Aorta (tissue), 5 donors: ENCODE measurements at regions of chr2 and their contacts with region 1.

Region 1: DNA sequence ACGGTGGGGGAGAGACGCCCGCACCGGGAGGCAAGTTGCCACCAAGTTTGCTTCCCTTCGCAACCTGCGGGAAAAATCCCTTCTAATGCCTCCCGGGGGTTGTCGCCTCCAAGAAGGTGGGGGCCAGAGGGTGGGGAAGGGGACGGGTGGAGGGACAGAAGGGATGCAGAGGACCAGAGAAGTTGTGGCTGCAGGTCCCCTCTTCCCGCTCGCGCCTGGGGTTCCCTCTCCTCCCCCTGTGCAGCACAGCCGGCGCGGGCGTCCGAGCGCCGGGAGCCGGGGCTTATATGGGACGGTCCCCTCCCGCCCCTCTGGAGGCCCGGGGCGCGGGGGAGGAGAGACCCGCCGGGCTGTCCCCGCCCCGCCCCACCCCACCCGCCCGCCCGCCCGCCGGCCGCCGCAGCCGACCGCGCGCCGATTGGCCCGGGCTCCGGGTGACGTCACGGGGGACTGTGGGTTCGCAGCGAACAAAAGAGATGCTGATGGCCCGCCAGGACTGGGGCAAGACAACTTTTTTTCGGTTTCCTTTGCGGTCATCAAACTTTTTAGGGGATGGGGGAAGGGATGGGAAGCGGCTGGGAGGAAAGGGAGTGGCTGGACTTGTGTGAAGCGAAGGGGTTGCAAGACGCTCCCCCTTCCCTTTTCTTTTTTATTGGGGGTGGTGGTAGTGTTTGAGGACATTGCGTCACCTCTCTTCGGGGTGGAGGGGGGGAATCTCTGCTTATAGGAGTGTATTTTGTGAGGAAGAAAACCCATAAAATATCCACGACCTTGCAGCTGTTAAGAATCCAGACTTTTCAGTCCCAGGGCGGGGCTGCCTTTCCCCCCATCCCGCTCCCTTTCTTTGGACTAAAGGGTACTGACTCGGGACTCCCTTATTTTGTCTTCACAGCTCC is at the start of gene FN1:
- DNase-seq: peak; percentile 97 to 98
- ATAC-seq: peak; percentile 96
- H3K4me3 ChIP-seq: peak within 1 kb of the TSS; percentile 72 to 91
- H3K27ac ChIP-seq: peak within 1 kb of the TSS; percentile 98 to 99
- H3K4me1 ChIP-seq: peaks cover 2 to 4% of the 10 kb centered on the region in 2 donors
- H3K27me3 ChIP-seq: no peaks in the 10 kb centered on the region
- total RNA-seq, gene FN1: 4,393 to 6,899 TPM

Region 2: DNA sequence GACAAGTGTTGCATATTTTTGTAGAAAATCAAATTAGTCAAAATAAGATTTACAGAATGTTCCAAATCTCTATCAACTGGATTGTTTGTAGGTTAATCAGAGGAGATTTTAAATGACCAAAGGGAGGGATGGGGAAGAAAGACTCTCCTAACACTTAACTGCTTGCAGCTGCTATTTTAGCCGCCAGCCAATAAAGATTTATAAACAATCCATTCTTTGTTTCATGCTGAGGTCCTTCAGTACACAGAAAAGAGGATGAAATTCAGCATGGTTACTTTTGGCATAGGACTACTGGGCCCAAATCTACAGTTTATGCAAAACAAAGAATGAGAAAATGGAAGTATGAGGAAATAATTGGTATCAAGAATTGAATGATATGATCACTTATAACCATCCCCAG is 86.2 kb after region 1 on chr2:
- intact Hi-C with region 1: no loop called
- DNase-seq: no peak
- ATAC-seq: no peak
- H3K4me3 ChIP-seq: no peak overlapping the region
- H3K27ac ChIP-seq: no peak overlapping the region
- H3K4me1 ChIP-seq: no peaks in the 10 kb centered on the region
- H3K27me3 ChIP-seq: no peaks in the 10 kb centered on the region

Region 3: DNA sequence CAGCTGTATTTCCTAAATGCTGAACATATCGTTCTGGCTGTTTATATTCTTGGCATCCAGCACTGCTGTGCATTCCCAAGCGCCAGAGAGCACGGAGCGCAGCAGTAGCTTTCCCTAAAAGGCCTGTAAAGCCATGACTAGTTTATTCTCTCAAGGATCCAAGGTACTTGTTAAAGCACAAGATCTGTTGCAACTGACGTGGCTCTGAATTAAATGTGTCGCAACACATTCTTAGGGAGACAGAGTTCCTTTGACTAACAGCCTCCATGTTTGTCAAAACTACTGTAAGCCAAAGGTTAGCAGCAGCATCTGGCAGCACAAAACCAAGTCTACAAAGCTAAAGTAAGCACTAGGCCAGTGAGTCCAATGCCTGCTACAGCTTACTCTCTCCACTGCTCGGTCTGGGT is 188.4 kb after region 1 on chr2:
- intact Hi-C with region 1: loop called in 1 of 2 experiments (anchors 10 kb)
- DNase-seq: peak in 1 of 2 donors; percentile 47
- ATAC-seq: peak; percentile 83
- H3K4me3 ChIP-seq: no peak overlapping the region
- H3K27ac ChIP-seq: peak overlapping the region; percentile 16 to 91
- H3K4me1 ChIP-seq: peaks cover 4 to 6% of the 10 kb centered on the region in 2 donors
- H3K27me3 ChIP-seq: no peaks in the 10 kb centered on the region

Region 4: GRCh38 chr2:215843579-215843978 is 407.5 kb after region 1 on chr2:
- intact Hi-C with region 1: loop called in 1 of 2 experiments (anchors 10 kb)
- DNase-seq: peak in 1 of 2 donors; percentile 59
- ATAC-seq: peak; percentile 83
- H3K4me3 ChIP-seq: no peak overlapping the region
- H3K27ac ChIP-seq: peak overlapping the region; percentile 11 to 13
- H3K4me1 ChIP-seq: peaks cover 0 to 3% of the 10 kb centered on the region in 2 donors
- H3K27me3 ChIP-seq: no peaks in the 10 kb centered on the region

Region 5: DNA sequence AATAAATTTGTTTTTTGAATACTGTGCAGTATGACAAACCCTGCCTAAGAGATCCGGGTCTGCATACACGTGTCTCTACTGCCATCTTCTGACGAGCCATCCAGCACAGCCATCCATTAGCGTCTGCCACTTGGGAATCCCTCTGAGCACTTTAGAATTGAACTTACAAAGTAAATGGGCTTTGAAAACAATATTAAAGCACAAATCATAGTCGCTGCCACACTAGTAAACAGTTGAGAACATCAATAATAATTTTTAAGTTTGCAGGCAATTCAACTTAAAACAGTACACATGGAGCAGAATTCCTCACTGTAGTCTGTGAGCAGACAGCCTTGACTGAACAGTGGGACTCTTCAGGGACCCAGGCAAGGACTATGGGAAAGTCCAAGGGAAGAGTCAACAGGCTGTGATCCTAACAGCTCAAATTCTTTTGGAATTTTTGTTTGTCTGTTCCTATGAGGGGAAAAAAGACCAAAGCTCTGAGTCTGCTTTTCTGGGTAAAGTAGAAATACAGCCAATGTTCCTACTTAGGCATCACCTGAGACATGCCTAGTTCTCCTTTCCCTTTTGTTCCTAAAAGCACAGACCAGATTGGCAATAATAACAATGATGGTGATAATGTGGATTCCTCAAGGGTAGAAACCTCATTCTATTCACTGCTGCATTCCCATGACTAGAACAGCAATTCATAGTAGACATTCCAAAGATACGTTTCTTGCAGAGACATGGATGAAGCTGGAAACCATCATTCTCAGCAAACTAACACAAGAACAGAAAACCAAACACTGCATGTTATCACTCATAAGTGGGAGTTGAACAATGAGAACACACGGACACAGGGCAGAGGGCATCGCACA is 484.4 kb after region 1 on chr2:
- intact Hi-C with region 1: loop called in 1 of 2 experiments (anchors 5 kb)
- DNase-seq: peak in 1 of 2 donors; percentile 76
- ATAC-seq: peak; percentile 95
- H3K4me3 ChIP-seq: no peak overlapping the region
- H3K27ac ChIP-seq: no peak overlapping the region
- H3K4me1 ChIP-seq: peaks cover 0 to 6% of the 10 kb centered on the region in 2 donors
- H3K27me3 ChIP-seq: no peaks in the 10 kb centered on the region